WTC11 (cell line): ENCODE measurements at regions of chr18 and their contacts with region 1.

Region 1: GRCh38 chr18:75041586-75041985 is 167.4 kb downstream of the PTGR3 start:
- DNase-seq: no peak
- ATAC-seq: peak; percentile 55
- H3K4me3 Mint-ChIP-seq: no peak overlapping the region
- H3K27ac Mint-ChIP-seq: peak overlapping the region; percentile 10; the same call in 1 of the 2 replicates
- H3K4me1 Mint-ChIP-seq: peaks cover 14% of the 10 kb centered on the region
- H3K27me3 Mint-ChIP-seq: no peaks in the 10 kb centered on the region
- CTCF ChIP-seq: no peak

Region 2: GRCh38 chr18:74896390-74896991 is 145.1 kb before region 1 on chr18:
- CTCF ChIA-PET with region 1: interaction called, 14 read pairs
- POLR2A ChIA-PET with region 1: no interaction called
- DNase-seq: peak; percentile 60
- ATAC-seq: peak; percentile 98
- H3K4me3 Mint-ChIP-seq: no peak overlapping the region
- H3K27ac Mint-ChIP-seq: no peak overlapping the region
- H3K4me1 Mint-ChIP-seq: peaks cover 14% of the 10 kb centered on the region
- H3K27me3 Mint-ChIP-seq: no peaks in the 10 kb centered on the region
- CTCF ChIP-seq: no peak; the same call in 1 of the 2 replicates

Region 3: GRCh38 chr18:75052475-75052874 is 10.9 kb after region 1 on chr18:
- CTCF ChIA-PET with region 1: interaction called, 14 read pairs
- POLR2A ChIA-PET with region 1: no interaction called
- DNase-seq: no peak
- ATAC-seq: no peak
- H3K4me3 Mint-ChIP-seq: no peak overlapping the region
- H3K27ac Mint-ChIP-seq: no peak overlapping the region
- H3K4me1 Mint-ChIP-seq: peaks cover 2% of the 10 kb centered on the region
- H3K27me3 Mint-ChIP-seq: no peaks in the 10 kb centered on the region
- CTCF ChIP-seq: no peak

Region 4: GRCh38 chr18:75070625-75071483 is 29.3 kb after region 1 on chr18:
- CTCF ChIA-PET with region 1: no interaction called
- POLR2A ChIA-PET with region 1: no interaction called
- DNase-seq: no peak
- ATAC-seq: no peak
- H3K4me3 Mint-ChIP-seq: no peak overlapping the region
- H3K27ac Mint-ChIP-seq: peak overlapping the region; percentile 20; the same call in 1 of the 2 replicates
- H3K4me1 Mint-ChIP-seq: peaks cover 4% of the 10 kb centered on the region; the same call in 1 of the 2 replicates
- H3K27me3 Mint-ChIP-seq: no peaks in the 10 kb centered on the region
- CTCF ChIP-seq: no peak